ENCODE measurements at regions of chr11 and their contacts with region 1.

Region 1: DNA sequence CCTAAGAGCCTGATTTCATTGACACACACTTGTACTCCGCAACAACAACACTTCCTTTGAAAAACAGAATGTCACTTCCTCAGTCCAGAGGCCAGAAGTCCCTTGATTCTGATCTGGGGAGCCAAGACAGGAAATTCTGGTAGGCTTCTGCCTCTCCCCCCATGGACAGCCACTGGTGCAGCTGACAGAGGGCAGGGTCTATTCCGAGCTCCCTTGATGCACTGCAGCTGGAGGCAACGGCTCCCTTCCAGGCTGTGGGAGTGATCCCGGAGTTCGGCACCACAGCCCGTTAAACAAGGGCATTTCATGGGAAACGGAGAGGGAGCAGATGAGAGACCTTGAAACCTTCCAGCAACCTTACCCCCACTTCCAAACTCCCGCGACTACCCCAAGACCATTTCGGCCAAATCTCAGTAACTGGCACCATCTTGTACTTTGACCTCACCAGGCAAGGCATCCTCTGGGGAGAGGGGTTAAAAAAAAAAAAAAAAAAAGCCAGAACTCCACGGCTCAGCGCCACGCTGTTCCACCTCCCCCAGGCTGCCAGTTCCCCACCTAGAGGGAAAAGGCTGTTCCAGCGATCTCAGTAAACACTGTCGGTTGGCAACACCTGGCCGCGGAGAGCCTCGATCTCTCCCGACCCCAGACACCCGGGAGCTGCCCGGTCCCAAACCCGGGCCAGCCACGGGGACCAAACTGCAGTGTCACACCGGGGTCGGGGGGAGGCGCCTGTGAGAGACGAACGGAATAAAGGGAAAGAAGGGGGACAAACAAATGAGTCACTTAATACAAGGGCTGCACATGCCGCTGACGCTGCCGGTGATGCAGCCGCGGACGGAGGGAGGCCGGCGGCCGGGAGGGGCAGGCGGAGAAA is 1.1 kb downstream of the GAB2 start:
- DNase-seq: peak; percentile 86 to 88
- H3K4me3 ChIP-seq: peak overlapping the region; percentile 85 to 94
- H3K27ac ChIP-seq: peak overlapping the region; percentile 99
- H3K4me1 ChIP-seq: peaks cover 0 to 5% of the 10 kb centered on the region in 2 donors
- H3K27me3 ChIP-seq: no peaks in the 10 kb centered on the region
- CTCF ChIP-seq: peak; percentile 6 to 61 (median 32)
- POLR2A ChIP-seq: peak; percentile 58 to 80

Region 2: GRCh38 chr11:78228467-78228866 is 188.1 kb before region 1 on chr11:
- intact Hi-C with region 1: loop called (anchors 10 kb)
- DNase-seq: no peak
- H3K4me3 ChIP-seq: no peak overlapping the region
- H3K27ac ChIP-seq: no peak overlapping the region
- H3K4me1 ChIP-seq: no peaks in the 10 kb centered on the region
- H3K27me3 ChIP-seq: no peaks in the 10 kb centered on the region
- CTCF ChIP-seq: peak; percentile 58 to 74 (median 61)
- POLR2A ChIP-seq: no peak

Region 3: GRCh38 chr11:78549624-78550409 is 133.3 kb after region 1 on chr11:
- intact Hi-C with region 1: loop called (anchors 10 kb)
- DNase-seq: no peak
- H3K4me3 ChIP-seq: no peak overlapping the region
- H3K27ac ChIP-seq: peak overlapping the region; percentile 18 to 24
- H3K4me1 ChIP-seq: no peaks in the 10 kb centered on the region
- H3K27me3 ChIP-seq: no peaks in the 10 kb centered on the region
- CTCF ChIP-seq: no peak
- POLR2A ChIP-seq: no peak

Measured in uterus (tissue), 4 donors.